ENCODE measurements at regions of chr21 and their contacts with region 1.

Region 1: DNA sequence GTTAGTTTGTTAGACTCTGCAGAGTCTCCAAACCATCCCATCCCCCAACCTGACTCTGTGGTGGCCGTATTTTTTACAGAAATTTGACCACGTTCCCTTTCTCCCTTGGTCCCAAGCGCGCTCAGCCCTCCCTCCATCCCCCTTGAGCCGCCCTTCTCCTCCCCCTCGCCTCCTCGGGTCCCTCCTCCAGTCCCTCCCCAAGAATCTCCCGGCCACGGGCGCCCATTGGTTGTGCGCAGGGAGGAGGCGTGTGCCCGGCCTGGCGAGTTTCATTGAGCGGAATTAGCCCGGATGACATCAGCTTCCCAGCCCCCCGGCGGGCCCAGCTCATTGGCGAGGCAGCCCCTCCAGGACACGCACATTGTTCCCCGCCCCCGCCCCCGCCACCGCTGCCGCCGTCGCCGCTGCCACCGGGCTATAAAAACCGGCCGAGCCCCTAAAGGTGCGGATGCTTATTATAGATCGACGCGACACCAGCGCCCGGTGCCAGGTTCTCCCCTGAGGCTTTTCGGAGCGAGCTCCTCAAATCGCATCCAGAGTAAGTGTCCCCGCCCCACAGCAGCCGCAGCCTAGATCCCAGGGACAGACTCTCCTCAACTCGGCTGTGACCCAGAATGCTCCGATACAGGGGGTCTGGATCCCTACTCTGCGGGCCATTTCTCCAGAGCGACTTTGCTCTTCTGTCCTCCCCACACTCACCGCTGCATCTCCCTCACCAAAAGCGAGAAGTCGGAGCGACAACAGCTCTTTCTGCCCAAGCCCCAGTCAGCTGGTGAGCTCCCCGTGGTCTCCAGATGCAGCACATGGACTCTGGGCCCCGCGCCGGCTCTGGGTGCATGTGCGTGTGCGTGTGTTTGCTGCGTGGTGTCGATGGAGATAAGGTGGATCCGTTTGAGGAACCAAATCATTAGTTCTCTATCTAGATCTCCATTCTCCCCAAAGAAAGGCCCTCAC is at the start of gene OLIG2:
- DNase-seq: peak; percentile 38
- ATAC-seq: no peak
- H3K4me3 Mint-ChIP-seq: no peak within 1 kb of the TSS
- H3K27ac Mint-ChIP-seq: no peak within 1 kb of the TSS
- H3K4me1 Mint-ChIP-seq: peaks cover 40% of the 10 kb centered on the region
- H3K27me3 Mint-ChIP-seq: peaks cover 77% of the 10 kb centered on the region
- total RNA-seq, gene OLIG2: not detected

Region 2: DNA sequence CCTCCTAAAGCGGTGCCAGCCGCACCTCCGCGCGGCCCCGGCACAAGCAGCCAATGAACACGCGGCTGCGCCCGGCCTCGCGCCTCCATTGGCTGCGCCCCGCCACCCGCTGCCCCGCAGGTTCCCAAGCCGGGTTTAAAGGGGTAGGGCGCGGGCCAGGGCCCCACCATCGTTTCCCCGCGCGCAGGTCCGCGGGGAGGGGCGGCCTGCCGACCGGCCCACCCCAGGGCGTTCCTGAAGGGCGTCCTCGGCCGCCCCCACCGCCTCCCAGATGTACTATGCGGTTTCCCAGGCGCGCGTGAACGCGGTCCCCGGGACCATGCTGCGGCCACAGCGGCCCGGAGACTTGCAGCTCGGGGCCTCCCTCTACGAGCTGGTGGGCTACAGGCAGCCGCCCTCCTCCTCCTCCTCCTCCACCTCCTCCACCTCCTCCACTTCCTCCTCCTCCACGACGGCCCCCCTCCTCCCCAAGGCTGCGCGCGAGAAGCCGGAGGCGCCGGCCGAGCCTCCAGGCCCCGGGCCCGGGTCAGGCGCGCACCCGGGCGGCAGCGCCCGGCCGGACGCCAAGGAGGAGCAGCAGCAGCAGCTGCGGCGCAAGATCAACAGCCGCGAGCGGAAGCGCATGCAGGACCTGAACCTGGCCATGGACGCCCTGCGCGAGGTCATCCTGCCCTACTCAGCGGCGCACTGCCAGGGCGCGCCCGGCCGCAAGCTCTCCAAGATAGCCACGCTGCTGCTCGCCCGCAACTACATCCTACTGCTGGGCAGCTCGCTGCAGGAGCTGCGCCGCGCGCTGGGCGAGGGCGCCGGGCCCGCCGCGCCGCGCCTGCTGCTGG is 44.4 kb after region 1 on chr21 and contains the start of gene OLIG1:
- CTCF ChIA-PET with region 1: interaction called, 3 read pairs
- POLR2A ChIA-PET with region 1: no interaction called
- intact Hi-C with region 1: loop called (anchors 1 to 2 kb)
- DNase-seq: peak; percentile 68
- ATAC-seq: peak; percentile 85
- H3K4me3 Mint-ChIP-seq: peak within 1 kb of the TSS; percentile 59
- H3K27ac Mint-ChIP-seq: no peak within 1 kb of the TSS
- H3K4me1 Mint-ChIP-seq: peaks cover 8% of the 10 kb centered on the region
- H3K27me3 Mint-ChIP-seq: peaks cover 57% of the 10 kb centered on the region
- total RNA-seq, gene OLIG1: not detected

Region 3: DNA sequence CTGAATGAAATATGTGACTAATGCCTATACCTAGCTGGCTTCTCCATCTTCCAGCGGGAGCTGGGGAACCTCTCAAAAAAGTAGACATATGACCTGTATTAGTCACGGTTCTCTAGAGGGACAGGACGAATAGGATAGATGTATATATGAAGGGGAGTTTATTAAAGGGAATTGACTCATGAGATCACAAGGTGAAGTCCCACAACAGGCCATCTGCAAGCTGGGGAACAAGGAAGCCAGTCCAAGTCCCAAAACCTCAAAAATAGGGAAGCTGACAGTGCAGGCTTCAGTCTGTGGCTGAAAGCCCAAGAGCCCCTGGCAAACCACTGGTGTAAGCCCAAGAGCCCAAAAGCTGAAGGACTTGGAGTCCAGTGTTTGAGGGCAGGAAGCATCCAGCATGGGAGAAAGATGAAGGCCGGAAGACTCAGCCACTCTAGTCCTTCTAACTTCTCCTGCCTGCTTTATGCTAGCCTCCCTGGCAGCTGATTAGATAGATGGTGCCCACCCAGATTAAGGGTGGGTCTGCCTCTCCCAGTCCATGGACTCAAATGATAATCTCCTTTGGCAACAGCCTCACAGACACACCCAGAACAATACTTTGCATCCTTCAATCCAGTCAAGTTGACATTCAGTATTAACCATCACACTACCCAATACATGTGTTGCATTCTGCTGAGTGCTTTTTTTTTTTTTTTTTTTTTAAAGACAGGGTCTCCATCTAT is 63.8 kb after region 1 on chr21:
- CTCF ChIA-PET with region 1: no interaction called
- POLR2A ChIA-PET with region 1: no interaction called
- intact Hi-C with region 1: no loop called
- DNase-seq: no peak
- ATAC-seq: no peak
- H3K4me3 Mint-ChIP-seq: no peak overlapping the region
- H3K27ac Mint-ChIP-seq: no peak overlapping the region
- H3K4me1 Mint-ChIP-seq: no peaks in the 10 kb centered on the region
- H3K27me3 Mint-ChIP-seq: peaks cover 3% of the 10 kb centered on the region

Region 4: DNA sequence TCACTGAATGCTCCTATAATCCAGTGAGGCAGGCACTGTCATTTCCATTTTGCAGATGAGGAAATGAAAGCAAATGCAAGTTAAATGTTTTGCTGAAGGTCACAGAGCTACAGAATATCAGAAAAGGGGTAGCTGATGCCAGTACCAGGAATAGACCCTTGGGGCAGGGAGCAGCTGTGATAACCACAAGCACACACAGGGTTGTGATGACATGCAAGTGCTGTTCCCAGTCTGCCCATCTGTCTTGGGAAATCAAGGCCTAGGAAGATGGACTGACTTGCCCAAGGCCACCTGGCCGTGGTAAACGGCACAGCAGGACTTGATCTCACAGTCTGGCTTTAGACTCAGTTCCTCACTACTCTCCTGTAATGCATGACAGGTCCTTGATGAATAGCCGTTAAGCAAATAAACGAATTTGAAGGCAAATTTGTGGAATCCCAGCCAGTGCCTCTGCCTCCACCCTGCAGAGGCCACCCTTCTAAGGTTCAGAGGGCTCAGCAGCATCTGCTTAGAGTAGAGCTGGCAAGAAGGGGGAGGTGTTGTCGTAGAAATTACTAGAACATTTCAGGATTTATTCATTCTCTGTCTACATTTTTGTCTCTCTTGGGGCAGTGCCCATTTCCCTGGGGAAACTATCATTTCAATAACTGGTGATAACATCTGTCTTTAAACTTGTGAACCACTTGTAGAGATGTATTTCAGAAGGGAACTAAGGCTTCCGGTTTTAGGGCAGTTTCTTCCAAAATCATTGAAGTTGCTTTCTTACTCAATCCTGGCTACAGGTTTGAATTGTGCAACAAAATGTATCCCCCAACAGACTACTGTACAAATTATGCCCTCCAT is 994.5 kb after region 1 on chr21:
- CTCF ChIA-PET with region 1: no interaction called
- POLR2A ChIA-PET with region 1: no interaction called
- intact Hi-C with region 1: no loop called
- DNase-seq: no peak
- ATAC-seq: peak; percentile 30
- H3K4me3 Mint-ChIP-seq: no peak overlapping the region
- H3K27ac Mint-ChIP-seq: no peak overlapping the region
- H3K4me1 Mint-ChIP-seq: peaks cover 11% of the 10 kb centered on the region
- H3K27me3 Mint-ChIP-seq: no peaks in the 10 kb centered on the region